ENCODE measurements at regions of chr10 and their contacts with region 1.

Region 1: DNA sequence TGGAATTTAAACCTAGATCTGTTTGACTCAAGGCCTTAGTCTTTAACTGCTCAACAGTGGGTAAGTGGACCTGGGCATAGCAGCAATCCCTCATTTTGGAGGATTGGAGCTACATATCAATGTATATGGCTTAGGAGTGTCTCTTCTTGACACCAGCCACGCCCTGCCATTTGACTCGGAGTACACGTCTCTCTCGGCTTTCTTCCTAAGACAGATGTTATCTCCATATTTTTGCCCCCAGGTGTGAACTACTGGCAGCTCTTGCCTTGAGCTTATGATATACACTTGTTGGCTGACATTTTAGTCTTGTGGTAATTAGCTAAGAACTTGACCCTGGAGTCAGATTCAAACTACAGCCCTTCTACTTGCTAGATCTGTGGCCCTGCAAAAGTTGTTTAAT is 189.4 kb downstream of the PTEN start:
- DNase-seq: no peak
- H3K4me3 ChIP-seq: no peak overlapping the region
- H3K27ac ChIP-seq: no peak overlapping the region
- H3K4me1 ChIP-seq: no peaks in the 10 kb centered on the region
- CTCF ChIP-seq: no peak

Region 2: GRCh38 chr10:88004451-88004850 is 48.3 kb before region 1 on chr10:
- CTCF ChIA-PET with region 1: no interaction called
- POLR2A ChIA-PET with region 1: no interaction called
- intact Hi-C with region 1: loop called (anchors 5 kb)
- DNase-seq: no peak
- H3K4me3 ChIP-seq: no peak overlapping the region
- H3K27ac ChIP-seq: no peak overlapping the region
- H3K4me1 ChIP-seq: no peaks in the 10 kb centered on the region
- CTCF ChIP-seq: no peak

Region 3: DNA sequence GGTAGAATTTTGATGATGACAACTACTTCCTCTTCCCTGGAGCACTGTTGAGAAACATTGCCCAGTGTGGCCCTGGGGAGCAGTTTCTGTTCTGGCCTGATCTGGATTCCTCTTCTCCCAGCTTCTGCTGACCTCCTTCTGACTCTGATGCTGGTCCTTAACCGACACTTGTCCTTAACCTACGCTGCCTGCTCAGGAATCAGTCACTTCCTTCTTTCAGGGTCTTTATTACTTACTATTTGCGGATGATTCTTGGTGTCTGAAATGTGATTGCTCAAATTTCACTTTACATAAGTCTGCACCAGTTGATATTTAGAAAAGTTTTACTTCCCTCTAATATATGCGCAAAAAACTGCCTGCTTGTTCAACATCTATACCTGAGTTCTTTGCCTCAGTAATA is 25.2 kb before region 1 on chr10:
- CTCF ChIA-PET with region 1: no interaction called
- POLR2A ChIA-PET with region 1: interaction called, 12 read pairs
- intact Hi-C with region 1: no loop called
- DNase-seq: peak; percentile 61
- H3K4me3 ChIP-seq: peak overlapping the region; percentile 47
- H3K27ac ChIP-seq: peak overlapping the region; percentile 70
- H3K4me1 ChIP-seq: peaks cover 29% of the 10 kb centered on the region
- CTCF ChIP-seq: no peak